Natural killer cell (primary cell): ENCODE measurements at regions of chr15 and their contacts with region 1.

Region 1: GRCh38 chr15:90557186-90558084 is 27.7 kb downstream of the CRTC3 start:
- DNase-seq: peak in 1 of 2 donors; percentile 35
- ATAC-seq: no peak
- H3K4me3 ChIP-seq: no peak overlapping the region
- H3K4me3 Mint-ChIP-seq: peak overlapping the region; percentile 21
- H3K27ac ChIP-seq: no peak overlapping the region
- H3K27ac Mint-ChIP-seq: peak overlapping the region; percentile 1 to 61
- H3K4me1 ChIP-seq: peaks cover 23% of the 10 kb centered on the region
- H3K4me1 Mint-ChIP-seq: peaks cover 71 to 74% of the 10 kb centered on the region in 2 donors
- H3K27me3 ChIP-seq: no peaks in the 10 kb centered on the region
- H3K27me3 Mint-ChIP-seq: no peaks in the 10 kb centered on the region
- CTCF ChIP-seq: no peak

Region 2: GRCh38 chr15:90471769-90472168 is 85.7 kb before region 1 on chr15:
- intact Hi-C with region 1: no loop called
- DNase-seq: no peak
- ATAC-seq: no peak
- H3K4me3 ChIP-seq: no peak overlapping the region
- H3K4me3 Mint-ChIP-seq: no peak overlapping the region
- H3K27ac ChIP-seq: no peak overlapping the region
- H3K27ac Mint-ChIP-seq: peak overlapping the region in 1 of 2 donors; percentile 83
- H3K4me1 ChIP-seq: no peaks in the 10 kb centered on the region
- H3K4me1 Mint-ChIP-seq: peaks cover 23 to 31% of the 10 kb centered on the region in 2 donors
- H3K27me3 ChIP-seq: no peaks in the 10 kb centered on the region
- H3K27me3 Mint-ChIP-seq: no peaks in the 10 kb centered on the region
- CTCF ChIP-seq: no peak

Region 3: GRCh38 chr15:90529371-90530249 is 27.8 kb before region 1 on chr15 and contains the start of gene CRTC3:
- intact Hi-C with region 1: loop called (anchors 2 kb)
- DNase-seq: peak; percentile 57 to 80
- ATAC-seq: peak; percentile 82 to 87 (median 82)
- H3K4me3 ChIP-seq: peak within 1 kb of the TSS; percentile 75
- H3K4me3 Mint-ChIP-seq: peak within 1 kb of the TSS; percentile 98
- H3K27ac ChIP-seq: peak within 1 kb of the TSS; percentile 75
- H3K27ac Mint-ChIP-seq: peak within 1 kb of the TSS; percentile 87 to 93
- H3K4me1 ChIP-seq: peaks cover 21% of the 10 kb centered on the region
- H3K4me1 Mint-ChIP-seq: peaks cover 41 to 46% of the 10 kb centered on the region in 2 donors
- H3K27me3 ChIP-seq: no peaks in the 10 kb centered on the region
- H3K27me3 Mint-ChIP-seq: no peaks in the 10 kb centered on the region
- CTCF ChIP-seq: no peak
- total RNA-seq, gene CRTC3: 68.8 to 101 (median 92.4) TPM

Region 4: DNA sequence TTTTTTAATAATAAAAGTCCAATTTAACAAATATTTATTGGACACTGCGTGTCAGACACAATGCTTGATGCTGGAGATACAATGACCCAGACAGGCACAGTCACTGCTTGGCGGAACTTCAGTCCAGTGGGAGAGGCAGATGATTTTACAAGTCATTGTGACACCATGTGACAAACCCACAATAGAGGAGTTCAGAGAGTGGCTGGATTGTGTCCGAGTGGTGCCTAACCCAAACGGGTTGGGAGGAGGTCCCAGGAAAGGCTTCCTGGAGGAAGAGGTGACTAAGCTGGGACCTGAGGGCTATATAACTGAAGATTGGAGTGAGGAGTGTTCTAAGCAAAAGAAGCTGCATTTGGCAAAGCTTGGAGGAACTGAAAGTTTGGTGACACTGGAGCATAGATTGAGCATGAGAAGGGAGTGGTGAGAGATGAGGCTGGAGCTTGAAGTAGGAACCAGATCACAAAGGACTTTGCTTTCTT is 13.7 kb after region 1 on chr15:
- intact Hi-C with region 1: loop called (anchors 2 kb)
- DNase-seq: no peak
- ATAC-seq: peak; percentile 28 to 67 (median 32)
- H3K4me3 ChIP-seq: no peak overlapping the region
- H3K4me3 Mint-ChIP-seq: peak overlapping the region; percentile 63
- H3K27ac ChIP-seq: peak overlapping the region; percentile 30
- H3K27ac Mint-ChIP-seq: peak overlapping the region; percentile 72 to 92
- H3K4me1 ChIP-seq: peaks cover 63% of the 10 kb centered on the region
- H3K4me1 Mint-ChIP-seq: peaks cover 68 to 75% of the 10 kb centered on the region in 2 donors
- H3K27me3 ChIP-seq: no peaks in the 10 kb centered on the region
- H3K27me3 Mint-ChIP-seq: no peaks in the 10 kb centered on the region
- CTCF ChIP-seq: no peak

Region 5: DNA sequence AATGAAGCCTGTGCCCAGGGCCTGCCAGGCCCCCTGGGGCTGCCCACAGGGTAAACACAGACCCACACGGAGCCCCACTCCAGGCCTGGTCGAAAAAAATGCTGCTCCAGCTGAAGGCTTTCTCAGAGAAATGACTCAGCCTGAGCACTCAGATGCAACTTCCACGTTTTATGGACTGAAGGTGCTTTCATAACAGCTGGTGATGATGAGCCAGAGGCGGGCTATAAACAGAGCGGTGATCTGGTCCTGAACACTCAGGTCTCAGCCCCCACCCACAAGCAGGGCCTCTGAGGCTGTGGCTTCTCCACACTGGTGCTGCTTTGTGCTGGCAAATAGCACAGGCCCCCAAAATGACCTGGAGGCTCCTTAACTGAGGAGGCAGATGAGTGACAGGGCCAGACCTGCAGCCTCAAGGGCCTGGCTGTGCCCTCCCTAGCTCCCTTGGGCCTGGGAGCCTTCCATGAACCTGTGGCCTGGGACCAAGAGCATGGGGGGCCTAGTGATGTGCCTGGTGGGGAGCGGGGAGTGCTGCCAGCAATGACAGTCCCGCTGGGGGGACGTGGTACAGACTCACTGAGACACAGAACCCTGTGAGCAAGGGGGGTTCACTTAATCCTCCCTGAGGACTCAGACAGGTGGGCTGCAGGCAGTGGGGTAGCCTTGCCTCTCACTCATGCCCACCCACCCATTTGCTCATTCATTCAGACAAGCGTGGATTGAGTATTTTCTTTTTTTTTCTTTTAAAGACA is 287.9 kb after region 1 on chr15:
- intact Hi-C with region 1: no loop called
- DNase-seq: peak in 1 of 2 donors; percentile 31
- ATAC-seq: peak; percentile 18 to 52 (median 42)
- H3K4me3 ChIP-seq: no peak overlapping the region
- H3K4me3 Mint-ChIP-seq: no peak overlapping the region
- H3K27ac ChIP-seq: no peak overlapping the region
- H3K27ac Mint-ChIP-seq: no peak overlapping the region
- H3K4me1 ChIP-seq: peaks cover 14% of the 10 kb centered on the region
- H3K4me1 Mint-ChIP-seq: peaks cover 0 to 5% of the 10 kb centered on the region in 2 donors
- H3K27me3 ChIP-seq: no peaks in the 10 kb centered on the region
- H3K27me3 Mint-ChIP-seq: peaks cover 0 to 2% of the 10 kb centered on the region in 2 donors
- CTCF ChIP-seq: no peak